ENCODE measurements at regions of chr11 and their contacts with region 1.

Region 1: DNA sequence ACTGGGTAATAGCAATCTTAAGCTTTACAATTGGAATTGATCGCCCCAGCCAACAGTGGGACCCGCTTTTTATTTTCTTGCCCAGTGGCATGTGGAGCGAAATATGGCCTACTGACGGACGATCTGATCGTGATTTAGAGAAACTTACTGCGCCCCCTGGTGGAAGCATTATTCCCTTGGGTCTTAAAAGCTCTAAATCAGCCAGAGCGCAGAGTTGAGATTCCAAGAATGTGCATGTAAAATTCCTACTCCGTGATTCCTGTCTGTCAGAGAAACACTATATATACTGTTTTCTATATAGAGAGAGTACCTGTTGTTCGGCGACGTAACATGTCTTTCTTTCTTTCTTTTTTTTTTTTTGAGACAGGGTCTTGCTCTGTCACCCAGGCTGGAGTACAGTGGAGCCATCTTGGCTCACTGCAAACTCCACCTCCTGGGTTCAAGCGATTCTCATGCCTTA is 3.7 kb upstream of the DPF2 start:
- DNase-seq: peak in 4 of 5 donors; percentile 75 to 88 (median 86)
- ATAC-seq: peak; percentile 10 to 32 (median 24)
- H3K4me3 ChIP-seq: peak overlapping the region in 1 of 12 donors; percentile 18
- H3K27ac ChIP-seq: peak overlapping the region in 4 of 12 donors; percentile 15 to 64 (median 23)
- H3K4me1 ChIP-seq: peaks cover 0 to 24% (median 9%) of the 10 kb centered on the region in 12 donors
- H3K27me3 ChIP-seq: no peaks in the 10 kb centered on the region
- CTCF ChIP-seq: peak; percentile 76 to 88 (median 84)
- POLR2A ChIP-seq: no peak

Region 2: DNA sequence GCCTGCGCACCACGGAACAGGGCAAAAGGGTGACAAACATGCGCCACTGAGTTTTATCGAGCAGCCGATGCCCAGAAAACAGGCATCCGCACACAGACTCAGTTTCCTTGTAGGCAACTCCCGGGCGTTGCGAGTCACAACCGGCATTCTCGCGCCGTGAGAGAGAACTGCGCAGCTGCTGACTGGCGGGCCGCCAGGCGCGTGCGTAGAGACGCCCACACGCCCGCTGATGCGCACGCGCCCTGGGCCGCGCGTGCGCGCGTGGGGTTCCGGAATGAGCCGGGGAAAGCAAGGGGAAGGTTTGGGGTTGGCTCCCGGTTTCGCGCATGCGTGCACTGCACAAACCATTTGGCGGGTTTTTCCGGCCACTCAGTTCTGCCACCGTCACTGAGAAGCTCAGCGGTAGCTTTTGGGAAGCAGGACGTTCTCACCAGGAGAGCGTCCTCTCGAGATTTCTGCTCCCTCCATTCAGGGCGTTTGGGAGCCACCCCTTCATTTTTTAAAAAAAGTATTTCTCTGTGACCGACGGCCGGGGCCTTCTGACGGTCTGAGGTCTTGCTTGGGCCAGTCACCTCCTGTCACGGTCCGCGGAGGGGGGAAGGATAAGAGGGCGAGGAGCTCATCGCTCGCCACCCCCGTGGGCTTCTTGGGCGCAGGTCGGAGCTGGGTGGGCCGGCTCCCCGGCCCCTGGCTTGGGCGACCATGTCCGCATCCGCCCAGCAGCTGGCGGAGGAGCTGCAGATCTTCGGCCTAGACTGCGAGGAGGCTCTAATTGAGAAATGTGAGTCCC is 68.2 kb before region 1 on chr11 and contains the start of gene POLA2:
- intact Hi-C with region 1: loop called in 1 of 10 experiments (anchors 5 kb)
- DNase-seq: peak; percentile 95 to 98 (median 95)
- ATAC-seq: peak; percentile 93 to 98 (median 96)
- H3K4me3 ChIP-seq: peak within 1 kb of the TSS; percentile 57 to 85 (median 76)
- H3K27ac ChIP-seq: peak within 1 kb of the TSS; percentile 71 to 96 (median 92)
- H3K4me1 ChIP-seq: peaks cover 0 to 21% (median 11%) of the 10 kb centered on the region in 12 donors
- H3K27me3 ChIP-seq: no peaks in the 10 kb centered on the region
- CTCF ChIP-seq: no peak
- POLR2A ChIP-seq: peak; percentile 69 to 89
- total RNA-seq, gene POLA2: 3.2 to 9.0 (median 4.2) TPM

Region 3: DNA sequence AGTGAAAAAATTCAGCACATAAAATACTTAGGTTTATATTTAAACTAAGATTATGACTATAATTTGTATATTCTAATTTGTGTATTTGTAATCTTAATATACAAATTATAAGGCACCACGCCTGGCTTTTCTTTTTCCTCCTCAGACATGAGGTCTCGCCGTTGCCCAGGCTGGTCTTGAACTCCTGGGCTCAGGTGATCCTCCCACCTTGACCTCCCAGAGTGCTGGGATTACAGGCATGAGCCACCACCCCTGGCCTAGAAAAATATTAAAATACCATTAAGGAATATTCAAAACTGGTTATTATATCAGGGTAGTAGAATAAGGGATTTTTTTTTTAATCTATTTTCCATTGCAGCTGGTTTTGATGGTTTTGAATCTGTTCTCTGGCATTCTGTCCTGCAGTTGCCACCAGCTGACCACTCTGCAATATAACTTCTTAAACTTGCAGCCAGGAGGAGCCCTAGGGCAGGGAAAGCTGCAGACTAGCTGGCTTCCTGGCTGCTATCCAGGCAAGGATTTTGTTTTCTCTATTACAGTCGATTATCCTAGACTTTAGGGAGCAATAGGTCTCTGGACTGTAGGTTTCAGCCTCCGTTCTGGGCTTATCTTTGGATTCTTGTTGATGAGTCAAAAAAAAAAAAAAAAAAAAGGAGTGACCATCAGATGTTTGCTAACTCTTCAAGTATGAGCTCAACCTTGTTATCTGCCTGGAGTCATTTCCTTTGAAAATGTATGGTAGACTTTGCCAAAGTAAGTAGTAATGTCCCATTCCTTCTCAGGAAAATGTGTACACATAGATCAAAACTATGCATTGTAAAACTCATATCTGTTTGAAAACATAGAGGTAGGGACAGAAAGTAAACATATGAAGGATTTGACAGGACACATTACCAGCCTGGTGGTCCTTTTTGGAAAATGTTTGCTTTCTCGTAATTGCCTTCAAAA is 55.0 kb before region 1 on chr11:
- intact Hi-C with region 1: loop called in 2 of 10 experiments (anchors 1 kb)
- DNase-seq: peak; percentile 72 to 89 (median 81)
- ATAC-seq: peak; percentile 75 to 93 (median 89)
- H3K4me3 ChIP-seq: no peak overlapping the region
- H3K27ac ChIP-seq: peak overlapping the region in 10 of 12 donors; percentile 31 to 58 (median 51)
- H3K4me1 ChIP-seq: peaks cover 0 to 28% (median 11%) of the 10 kb centered on the region in 12 donors
- H3K27me3 ChIP-seq: no peaks in the 10 kb centered on the region
- CTCF ChIP-seq: peak; percentile 62 to 89 (median 81)
- POLR2A ChIP-seq: no peak

Region 4: GRCh38 chr11:65382033-65382807 is 52.2 kb after region 1 on chr11 and contains the start of gene SLC25A45:
- intact Hi-C with region 1: no loop called
- DNase-seq: peak; percentile 92 to 96 (median 95)
- ATAC-seq: peak; percentile 90 to 95 (median 92)
- H3K4me3 ChIP-seq: peak within 1 kb of the TSS; percentile 6 to 59 (median 50)
- H3K27ac ChIP-seq: peak within 1 kb of the TSS; percentile 90 to 99 (median 96)
- H3K4me1 ChIP-seq: peaks cover 12 to 71% (median 41%) of the 10 kb centered on the region in 12 donors
- H3K27me3 ChIP-seq: no peaks in the 10 kb centered on the region
- CTCF ChIP-seq: peak; percentile 80 to 97 (median 85)
- POLR2A ChIP-seq: peak in 1 of 2 donors; percentile 80
- total RNA-seq, gene SLC25A45: 3.8 to 11.6 (median 6.6) TPM

Region 5: DNA sequence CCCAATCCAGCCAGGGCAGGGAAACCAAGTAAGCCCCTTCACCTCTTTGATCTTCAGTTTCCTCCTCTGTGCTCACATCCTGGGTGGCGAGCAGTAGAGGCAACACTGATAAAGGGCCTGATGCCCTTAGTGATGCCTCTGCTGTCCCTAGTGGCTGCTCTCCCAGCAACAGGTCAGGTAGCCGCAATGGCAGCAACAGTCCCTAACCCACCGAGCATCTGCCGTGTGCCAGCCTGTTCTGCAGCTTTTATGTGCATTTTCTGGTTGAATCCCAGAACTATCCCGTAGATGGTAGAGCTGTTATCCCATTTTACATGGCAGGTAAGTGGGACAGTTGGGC is 200.2 kb after region 1 on chr11:
- intact Hi-C with region 1: no loop called
- DNase-seq: no peak
- ATAC-seq: no peak
- H3K4me3 ChIP-seq: no peak overlapping the region
- H3K27ac ChIP-seq: no peak overlapping the region
- H3K4me1 ChIP-seq: peaks cover 0 to 29% (median 12%) of the 10 kb centered on the region in 12 donors
- H3K27me3 ChIP-seq: no peaks in the 10 kb centered on the region
- CTCF ChIP-seq: no peak
- POLR2A ChIP-seq: no peak

Measured in heart left ventricle (tissue), 16 donors.